PC-9 (cell line): ENCODE measurements at regions of chr1 and their contacts with region 1.

Region 1: GRCh38 chr1:28470146-28470545 is 35.7 kb upstream of the RCC1 start:
- DNase-seq: no peak
- H3K4me3 ChIP-seq: no peak overlapping the region
- H3K27ac ChIP-seq: no peak overlapping the region
- H3K4me1 ChIP-seq: peaks cover 8% of the 10 kb centered on the region
- H3K27me3 ChIP-seq: no peaks in the 10 kb centered on the region
- CTCF ChIP-seq: no peak

Region 2: DNA sequence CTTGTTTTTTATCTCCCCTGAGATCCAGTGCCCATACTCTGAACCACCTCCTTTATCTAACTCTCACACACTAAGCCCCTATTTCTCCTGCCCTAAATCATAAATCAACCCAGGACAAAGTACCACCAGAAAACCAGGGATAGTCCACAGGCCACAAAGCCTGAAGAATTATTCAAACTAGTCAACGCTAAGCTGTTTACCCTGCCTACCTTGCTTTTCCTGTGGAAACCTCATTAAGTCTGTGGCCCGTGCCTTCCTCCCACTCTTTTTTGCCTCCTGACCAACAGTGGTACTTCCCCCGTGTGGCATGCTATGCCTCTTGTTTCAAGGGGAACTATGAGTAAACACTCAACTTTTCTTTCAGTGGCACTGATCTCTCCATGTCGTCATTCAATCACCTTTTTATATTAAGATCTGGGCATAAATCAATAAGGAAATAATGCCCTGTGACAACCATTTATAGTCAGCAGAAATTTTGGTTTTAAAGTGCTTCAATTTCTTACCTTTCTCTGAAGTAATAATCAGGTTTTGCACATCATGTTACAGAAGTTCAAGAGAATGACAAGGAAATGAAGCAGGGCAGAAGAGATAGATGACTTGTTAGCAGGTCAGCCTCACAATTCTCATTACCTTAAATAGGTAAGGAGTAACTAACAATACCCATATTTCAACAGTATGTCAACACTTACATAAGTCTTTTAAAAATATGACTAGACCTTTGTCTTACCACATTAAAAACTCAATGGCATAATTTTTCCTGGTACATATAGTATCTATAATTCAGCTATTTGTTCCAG is 413.8 kb before region 1 on chr1:
- CTCF ChIA-PET with region 1: no interaction called
- POLR2A ChIA-PET with region 1: no interaction called
- intact Hi-C with region 1: no loop called
- DNase-seq: no peak
- H3K4me3 ChIP-seq: no peak overlapping the region
- H3K27ac ChIP-seq: no peak overlapping the region
- H3K4me1 ChIP-seq: 0 out of 2 replicates have a peak, but pooled peaks cover 5% of the 10 kb centered on the region
- H3K27me3 ChIP-seq: no peaks in the 10 kb centered on the region
- CTCF ChIP-seq: no peak

Region 3: DNA sequence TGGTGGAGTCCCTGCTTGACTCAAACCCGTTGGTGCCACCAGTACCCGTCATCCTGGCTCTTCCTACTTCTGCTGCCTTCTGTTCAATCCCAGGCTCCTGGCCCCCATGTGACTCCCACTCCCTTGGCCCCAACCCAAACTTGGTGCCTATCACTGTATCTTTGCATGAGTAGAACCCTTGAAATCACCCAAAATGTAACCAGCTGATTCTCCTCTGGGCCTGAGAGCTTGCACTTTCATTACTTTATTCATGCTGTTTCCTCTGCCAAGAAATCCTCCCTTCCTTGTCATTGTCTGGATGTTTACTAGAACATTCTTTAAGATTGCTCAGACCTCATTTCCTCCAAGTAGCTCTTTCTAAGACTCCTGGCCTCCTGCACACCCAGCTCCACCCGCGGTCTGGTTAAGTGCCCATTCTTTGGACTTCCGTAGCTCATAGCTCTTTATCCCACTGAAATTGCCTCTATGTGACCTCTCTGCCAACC is 309.3 kb before region 1 on chr1:
- CTCF ChIA-PET with region 1: no interaction called
- POLR2A ChIA-PET with region 1: no interaction called
- intact Hi-C with region 1: no loop called
- DNase-seq: no peak
- H3K4me3 ChIP-seq: no peak overlapping the region
- H3K27ac ChIP-seq: no peak overlapping the region
- H3K4me1 ChIP-seq: no peaks in the 10 kb centered on the region
- H3K27me3 ChIP-seq: no peaks in the 10 kb centered on the region
- CTCF ChIP-seq: no peak

Region 4: GRCh38 chr1:28412731-28413130 is 57.4 kb before region 1 on chr1:
- CTCF ChIA-PET with region 1: no interaction called
- POLR2A ChIA-PET with region 1: no interaction called
- intact Hi-C with region 1: loop called (anchors 2 kb)
- DNase-seq: no peak
- H3K4me3 ChIP-seq: no peak overlapping the region
- H3K27ac ChIP-seq: no peak overlapping the region
- H3K4me1 ChIP-seq: peaks cover 13% of the 10 kb centered on the region
- H3K27me3 ChIP-seq: no peaks in the 10 kb centered on the region
- CTCF ChIP-seq: no peak

Region 5: GRCh38 chr1:28642847-28643635 is 172.9 kb after region 1 on chr1 and contains the start of gene TAF12:
- CTCF ChIA-PET with region 1: no interaction called
- POLR2A ChIA-PET with region 1: no interaction called
- intact Hi-C with region 1: no loop called
- DNase-seq: peak; percentile 81 to 85
- H3K4me3 ChIP-seq: peak within 1 kb of the TSS; percentile 91
- H3K27ac ChIP-seq: peak within 1 kb of the TSS; percentile 97
- H3K4me1 ChIP-seq: peaks cover 16% of the 10 kb centered on the region
- H3K27me3 ChIP-seq: no peaks in the 10 kb centered on the region
- CTCF ChIP-seq: no peak; the same call in 1 of the 2 replicates
- total RNA-seq, gene TAF12: 19.9 and 28.4 TPM in 2 replicates

Region 6: DNA sequence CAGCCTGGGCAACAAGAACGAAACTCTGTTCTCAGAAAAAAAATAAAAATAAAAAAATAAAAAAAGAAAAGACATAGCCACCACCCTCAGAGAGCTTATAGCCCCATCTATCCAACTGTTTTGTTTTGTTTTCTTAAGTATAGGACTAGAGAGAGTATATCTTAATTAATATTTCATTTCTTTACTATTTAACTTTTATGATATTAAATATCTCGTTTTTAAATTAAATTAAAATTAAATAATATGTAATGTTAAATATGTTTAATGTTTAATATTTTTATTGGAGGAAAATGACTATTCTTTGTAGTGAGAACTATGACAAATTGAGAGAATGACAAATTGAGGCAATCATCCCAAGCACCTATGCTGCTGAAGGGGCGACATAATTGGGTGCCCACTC is 233.5 kb after region 1 on chr1:
- CTCF ChIA-PET with region 1: no interaction called
- POLR2A ChIA-PET with region 1: no interaction called
- intact Hi-C with region 1: no loop called
- DNase-seq: no peak
- H3K4me3 ChIP-seq: no peak overlapping the region
- H3K27ac ChIP-seq: no peak overlapping the region
- H3K4me1 ChIP-seq: no peaks in the 10 kb centered on the region
- H3K27me3 ChIP-seq: no peaks in the 10 kb centered on the region
- CTCF ChIP-seq: no peak